Mammary epithelial cell (primary cell): ENCODE measurements at regions of chr1 and their contacts with region 1.

Region 1: GRCh38 chr1:20493839-20494608 is 8.0 kb upstream of the CAMK2N1 start:
- DNase-seq: peak; percentile 91
- H3K4me3 ChIP-seq: no peak overlapping the region
- H3K27ac ChIP-seq: peak overlapping the region; percentile 94
- H3K4me1 ChIP-seq: peaks cover 42% of the 10 kb centered on the region
- H3K27me3 ChIP-seq: no peaks in the 10 kb centered on the region
- CTCF ChIP-seq: peak; percentile 98 to 99

Region 2: GRCh38 chr1:19974822-19975416 is 519.1 kb before region 1 on chr1:
- CTCF ChIA-PET with region 1: no interaction called
- dilution Hi-C with region 1: no loop called
- in situ Hi-C with region 1: no loop called
- intact Hi-C with region 1: loop called (anchors 1 kb)
- DNase-seq: peak; percentile 86
- H3K4me3 ChIP-seq: no peak overlapping the region
- H3K27ac ChIP-seq: no peak overlapping the region
- H3K4me1 ChIP-seq: peaks cover 6% of the 10 kb centered on the region
- H3K27me3 ChIP-seq: no peaks in the 10 kb centered on the region
- CTCF ChIP-seq: peak; percentile 100

Region 3: GRCh38 chr1:20151906-20152598 is 342.0 kb before region 1 on chr1:
- CTCF ChIA-PET with region 1: interaction called, 6 read pairs
- dilution Hi-C with region 1: loop called (anchors 5 kb)
- in situ Hi-C with region 1: no loop called
- intact Hi-C with region 1: loop called (anchors 1 kb)
- DNase-seq: peak; percentile 50
- H3K4me3 ChIP-seq: peak overlapping the region; percentile 25 to 57 (median 35)
- H3K27ac ChIP-seq: no peak overlapping the region
- H3K4me1 ChIP-seq: peaks cover 6% of the 10 kb centered on the region
- H3K27me3 ChIP-seq: no peaks in the 10 kb centered on the region
- CTCF ChIP-seq: peak; percentile 79 to 89

Region 4: DNA sequence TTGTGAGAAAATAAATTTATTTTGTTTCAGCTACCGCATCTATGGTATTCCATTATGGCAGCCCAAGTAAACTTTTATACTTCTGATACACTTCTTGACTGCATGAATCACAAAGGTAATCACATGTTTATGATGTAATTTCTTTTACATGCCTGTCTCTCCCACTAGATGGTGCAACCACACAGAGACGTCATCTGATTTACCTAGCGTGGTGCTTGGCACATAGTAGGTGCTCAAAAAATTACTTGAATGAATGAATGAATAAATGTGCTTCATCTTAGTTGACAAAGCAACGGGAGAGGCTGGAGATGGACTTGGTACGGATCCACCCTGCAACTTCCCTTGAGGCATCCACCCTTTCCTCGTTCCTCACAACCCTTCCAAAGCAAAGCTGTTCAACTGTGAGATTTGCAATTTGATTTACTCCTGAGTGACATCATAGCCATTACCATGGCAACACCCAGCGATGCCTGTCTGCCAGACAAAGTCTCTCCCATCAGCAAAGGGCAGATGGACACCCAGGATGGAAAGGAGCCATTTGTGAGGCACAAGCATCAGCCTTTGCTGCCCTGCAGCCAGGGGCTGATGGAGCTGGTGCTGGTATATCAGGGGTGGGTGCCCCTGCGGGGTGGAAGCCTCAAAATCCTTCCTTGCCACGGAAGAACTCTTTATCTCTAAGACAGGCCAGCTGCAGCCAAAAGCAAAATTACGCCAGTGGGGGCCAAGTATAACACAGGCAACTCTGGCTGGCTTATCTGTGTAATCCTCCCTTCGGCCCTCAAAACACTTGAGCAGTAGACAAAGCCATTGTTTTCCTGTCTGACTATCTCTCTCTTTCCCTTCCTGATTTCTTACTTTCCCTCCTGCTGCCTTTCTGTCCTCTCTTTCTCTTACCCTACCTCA is 222.3 kb before region 1 on chr1:
- CTCF ChIA-PET with region 1: no interaction called
- dilution Hi-C with region 1: no loop called
- in situ Hi-C with region 1: no loop called
- intact Hi-C with region 1: loop called (anchors 1 kb)
- DNase-seq: peak; percentile 20
- H3K4me3 ChIP-seq: no peak overlapping the region
- H3K27ac ChIP-seq: no peak overlapping the region
- H3K4me1 ChIP-seq: no peaks in the 10 kb centered on the region
- H3K27me3 ChIP-seq: no peaks in the 10 kb centered on the region
- CTCF ChIP-seq: peak; percentile 17 to 22

Region 5: GRCh38 chr1:20376880-20377494 is 117.0 kb before region 1 on chr1:
- CTCF ChIA-PET with region 1: no interaction called
- dilution Hi-C with region 1: no loop called
- in situ Hi-C with region 1: loop called in 1 of 2 experiments (anchors 5 kb)
- intact Hi-C with region 1: loop called (anchors 1 kb)
- DNase-seq: peak; percentile 28
- H3K4me3 ChIP-seq: no peak overlapping the region
- H3K27ac ChIP-seq: no peak overlapping the region
- H3K4me1 ChIP-seq: peaks cover 29% of the 10 kb centered on the region
- H3K27me3 ChIP-seq: no peaks in the 10 kb centered on the region
- CTCF ChIP-seq: peak; percentile 82 to 86

Region 6: DNA sequence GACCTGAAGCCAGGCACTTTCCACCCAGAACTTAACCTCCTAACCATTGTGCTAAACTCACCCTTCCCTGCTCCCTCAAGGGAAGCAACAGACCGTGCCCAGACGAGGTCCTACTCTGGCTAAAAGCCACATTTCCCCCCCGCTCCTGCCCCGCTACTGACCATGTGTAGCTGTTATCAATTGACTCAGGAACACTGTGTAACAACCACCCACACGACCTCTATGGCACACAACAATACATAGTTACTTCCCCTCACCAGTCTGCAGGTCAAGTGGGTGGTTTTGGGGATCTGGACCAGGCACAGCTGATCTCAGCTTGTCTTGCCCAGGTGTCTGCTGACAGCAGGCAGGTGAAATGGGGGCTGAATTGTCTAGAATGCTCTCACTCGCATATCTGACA is 48.1 kb before region 1 on chr1:
- CTCF ChIA-PET with region 1: interaction called, 15 read pairs
- dilution Hi-C with region 1: no loop called
- in situ Hi-C with region 1: no loop called
- intact Hi-C with region 1: no loop called
- DNase-seq: no peak
- H3K4me3 ChIP-seq: no peak overlapping the region
- H3K27ac ChIP-seq: no peak overlapping the region
- H3K4me1 ChIP-seq: peaks cover 11% of the 10 kb centered on the region
- H3K27me3 ChIP-seq: no peaks in the 10 kb centered on the region
- CTCF ChIP-seq: no peak